Breast epithelium (tissue), 4 donors: ENCODE measurements at regions of chr10 and their contacts with region 1.

Region 1: GRCh38 chr10:71532878-71533277 is 136.2 kb downstream of the CDH23 start:
- DNase-seq: no peak
- H3K4me3 ChIP-seq: no peak overlapping the region
- H3K27ac ChIP-seq: no peak overlapping the region
- H3K4me1 ChIP-seq: no peaks in the 10 kb centered on the region
- H3K27me3 ChIP-seq: no peaks in the 10 kb centered on the region
- CTCF ChIP-seq: no peak
- POLR2A ChIP-seq: no peak

Region 2: DNA sequence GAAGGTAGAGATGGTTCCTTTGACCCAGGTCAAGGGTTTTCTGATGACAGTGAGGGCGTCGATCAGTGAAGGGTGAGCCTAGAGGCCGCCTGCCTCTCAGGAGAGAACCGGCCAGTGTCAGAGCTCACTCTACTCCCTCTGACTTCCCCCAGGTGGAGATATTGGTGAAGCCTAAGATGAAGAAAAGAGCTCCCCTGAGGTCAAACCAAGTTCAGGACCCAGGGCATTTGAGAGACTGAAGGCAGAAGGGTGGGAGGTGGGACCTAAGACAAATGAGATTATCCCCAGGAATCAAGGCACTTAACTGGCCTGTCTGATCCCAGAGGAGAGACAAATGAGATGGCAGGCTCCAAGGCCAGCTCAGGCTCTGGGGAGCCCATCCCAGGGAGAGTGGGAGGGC is 31.5 kb before region 1 on chr10:
- intact Hi-C with region 1: no loop called
- DNase-seq: no peak
- H3K4me3 ChIP-seq: no peak overlapping the region
- H3K27ac ChIP-seq: no peak overlapping the region
- H3K4me1 ChIP-seq: no peaks in the 10 kb centered on the region
- H3K27me3 ChIP-seq: no peaks in the 10 kb centered on the region
- CTCF ChIP-seq: no peak
- POLR2A ChIP-seq: no peak

Region 3: DNA sequence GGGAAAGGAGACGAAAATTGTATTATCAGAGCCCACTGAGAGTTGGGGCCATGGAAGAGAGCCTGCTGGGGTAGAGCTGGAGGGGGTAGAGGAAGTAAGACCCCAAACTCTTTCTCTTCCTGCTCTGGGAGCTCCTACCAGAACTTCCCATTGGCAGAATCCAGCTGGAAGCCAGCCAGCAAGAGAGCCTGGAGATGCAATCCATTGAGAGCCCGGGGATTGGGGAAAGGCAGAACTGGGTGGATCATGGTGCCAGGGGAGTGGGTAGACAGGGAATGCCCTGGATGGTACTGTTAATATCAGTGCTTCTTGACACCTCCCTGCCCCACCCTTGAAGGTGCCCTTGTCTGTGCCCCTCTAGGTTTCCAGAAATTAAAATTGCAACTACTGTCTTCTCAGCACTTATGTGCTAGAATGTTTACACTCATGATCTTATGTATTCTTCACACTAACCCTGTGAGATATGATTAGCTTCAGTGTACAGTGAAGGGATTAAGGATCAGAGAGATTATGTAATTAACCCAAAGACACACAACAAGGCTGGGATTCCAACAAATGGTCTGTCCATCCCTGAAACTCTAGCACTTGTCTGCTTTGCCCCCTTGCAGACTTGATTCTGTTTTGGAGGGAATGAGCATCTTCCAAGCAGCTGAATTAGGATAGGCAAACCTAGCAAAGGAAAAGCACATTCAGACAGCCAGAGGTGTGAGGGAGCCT is 32.6 kb after region 1 on chr10:
- intact Hi-C with region 1: loop called (anchors 1 kb)
- DNase-seq: no peak
- H3K4me3 ChIP-seq: no peak overlapping the region
- H3K27ac ChIP-seq: no peak overlapping the region
- H3K4me1 ChIP-seq: no peaks in the 10 kb centered on the region
- H3K27me3 ChIP-seq: no peaks in the 10 kb centered on the region
- CTCF ChIP-seq: no peak
- POLR2A ChIP-seq: no peak